Activated T-helper 1 cell treated with anti-CD3 and anti-CD28 coated beads, Interleukin-12 subunit alpha, Interleukin-12 subunit beta, Interleukin-2, Interleukin-4 antibody, amounts not matched to agents 30 ng/mL and 10 ng/mL and 1 ng/mL, durations not matched to agents 14 hours and 24 hours and 36 hours (primary cell): ENCODE measurements at regions of chr12 and their contacts with region 1.

Region 1: GRCh38 chr12:49347384-49348237 is 923 bp downstream of the DNAJC22 start:
- DNase-seq: peak; percentile 69
- H3K4me3 Mint-ChIP-seq: peak overlapping the region; percentile 79
- H3K27ac Mint-ChIP-seq: no peak overlapping the region
- H3K4me1 Mint-ChIP-seq: peaks cover 24% of the 10 kb centered on the region
- H3K27me3 Mint-ChIP-seq: peaks cover 64% of the 10 kb centered on the region

Region 2: GRCh38 chr12:49331380-49332222 is 16.0 kb before region 1 on chr12:
- intact Hi-C with region 1: loop called (anchors 2 kb)
- DNase-seq: no peak
- H3K4me3 Mint-ChIP-seq: no peak overlapping the region
- H3K27ac Mint-ChIP-seq: no peak overlapping the region
- H3K4me1 Mint-ChIP-seq: peaks cover 7% of the 10 kb centered on the region
- H3K27me3 Mint-ChIP-seq: peaks cover 30% of the 10 kb centered on the region

Region 3: DNA sequence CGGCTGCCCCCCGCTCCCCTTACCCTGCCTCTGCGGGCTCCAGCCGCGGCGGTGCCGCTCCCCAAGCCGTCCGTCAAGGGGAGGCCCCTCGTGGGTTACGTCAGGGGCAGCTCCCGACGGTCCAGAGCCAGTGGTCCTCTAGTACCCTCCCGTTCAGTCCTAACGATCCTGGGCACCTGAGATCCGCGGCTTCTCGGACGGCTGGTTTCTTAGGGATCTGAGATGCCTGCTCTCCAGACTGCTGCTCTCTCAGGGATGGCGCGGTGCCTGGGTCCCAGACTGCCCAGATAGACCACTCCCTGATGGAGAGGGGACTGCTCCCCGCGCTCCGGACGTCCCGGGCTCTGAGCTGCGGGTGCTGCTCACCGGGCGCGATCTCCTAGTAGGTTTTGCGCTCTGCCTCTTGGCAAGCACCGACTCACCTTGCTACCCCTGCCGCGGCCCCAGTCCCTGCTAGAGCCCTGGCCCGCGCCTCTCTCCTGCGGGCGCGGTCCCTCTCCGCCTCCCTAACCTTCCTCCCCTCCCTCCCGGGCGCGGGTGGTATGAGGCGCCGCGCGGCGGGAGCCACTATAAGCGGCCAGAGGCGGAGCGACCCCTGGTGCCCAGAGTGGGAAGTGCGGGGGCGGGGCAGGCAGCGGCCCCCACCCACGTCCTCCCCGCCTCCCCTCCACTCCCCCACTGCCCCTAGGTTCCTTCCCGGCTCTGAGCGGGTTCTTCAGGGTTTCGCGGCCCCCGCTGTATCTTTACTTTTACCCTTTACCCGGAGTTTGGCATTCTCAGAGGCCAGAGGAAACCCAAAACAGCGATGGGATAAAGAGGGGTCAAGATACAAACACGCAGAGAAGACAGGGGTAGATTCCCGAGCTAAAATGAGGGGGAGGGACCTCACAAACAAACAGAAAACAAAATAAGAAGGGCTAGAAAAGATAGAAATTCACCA is 10.7 kb before region 1 on chr12 and contains the start of gene C1QL4:
- intact Hi-C with region 1: loop called (anchors 1 kb)
- DNase-seq: peak; percentile 83
- H3K4me3 Mint-ChIP-seq: peak within 1 kb of the TSS; percentile 63
- H3K27ac Mint-ChIP-seq: peak within 1 kb of the TSS; percentile 52
- H3K4me1 Mint-ChIP-seq: peaks cover 21% of the 10 kb centered on the region
- H3K27me3 Mint-ChIP-seq: peaks cover 76% of the 10 kb centered on the region
- total RNA-seq, gene C1QL4: not detected in 2 replicates

Region 4: DNA sequence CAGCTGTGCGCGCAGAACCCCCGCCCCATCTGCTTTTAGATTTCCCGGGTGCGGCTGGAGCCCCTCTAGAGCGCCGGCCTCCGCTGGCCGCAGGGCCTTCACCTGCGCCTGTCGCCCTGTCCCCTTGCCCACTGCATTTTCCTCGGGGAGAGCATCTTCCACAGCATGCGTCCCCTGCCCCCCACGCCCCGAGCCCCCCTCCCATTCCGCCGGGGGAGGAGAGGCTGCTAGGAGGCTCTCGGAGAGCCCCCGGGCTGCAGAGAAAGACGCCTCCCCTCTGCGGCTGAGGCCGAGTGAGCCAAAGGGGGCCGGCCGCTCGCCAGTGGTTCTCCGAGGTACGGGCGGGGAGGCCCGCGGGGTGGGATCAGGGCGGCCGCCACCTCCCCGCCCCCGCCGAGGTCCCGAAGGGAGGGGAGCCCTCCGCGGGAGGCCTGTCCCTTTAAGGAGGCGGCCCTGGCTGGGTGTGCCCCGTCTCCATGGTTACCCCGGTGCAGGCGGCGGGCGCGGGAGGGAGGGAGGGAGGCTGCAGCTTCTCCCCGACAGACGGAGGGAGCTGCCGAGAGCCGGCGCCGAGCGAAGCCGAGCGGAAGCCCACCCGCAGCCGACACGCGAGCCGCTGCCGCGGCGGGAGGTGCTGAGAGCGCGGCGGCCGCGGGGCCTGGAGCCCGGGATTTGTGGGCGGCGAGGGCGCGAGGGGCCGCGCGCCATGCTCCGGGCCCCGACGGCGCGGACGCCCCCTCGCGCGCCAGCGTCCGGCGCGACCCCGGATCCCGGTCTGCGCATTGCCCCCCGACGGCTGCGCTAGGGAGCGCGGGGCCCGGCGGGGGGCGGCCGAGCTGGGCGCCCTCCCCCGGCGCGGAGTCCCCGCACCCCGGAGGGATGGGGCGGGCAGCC is 191.1 kb after region 1 on chr12 and contains the start of gene KCNH3:
- intact Hi-C with region 1: no loop called
- DNase-seq: peak; percentile 80
- H3K4me3 Mint-ChIP-seq: peak within 1 kb of the TSS; percentile 70
- H3K27ac Mint-ChIP-seq: no peak within 1 kb of the TSS
- H3K4me1 Mint-ChIP-seq: no peaks in the 10 kb centered on the region
- H3K27me3 Mint-ChIP-seq: peaks cover 49% of the 10 kb centered on the region
- total RNA-seq, gene KCNH3: 0.93 and 1.6 TPM in 2 replicates